Left ventricle myocardium inferior (tissue), 1 donor: ENCODE measurements at regions of chr3 and their contacts with region 1.

Region 1: GRCh38 chr3:129249276-129250065 is at the start of gene COPG1:
- DNase-seq: peak; percentile 86
- H3K4me3 ChIP-seq: peak within 1 kb of the TSS; percentile 95
- H3K27ac ChIP-seq: peak within 1 kb of the TSS; percentile 90
- H3K4me1 ChIP-seq: peaks cover 69% of the 10 kb centered on the region
- H3K27me3 ChIP-seq: no peaks in the 10 kb centered on the region
- CTCF ChIP-seq: no peak
- total RNA-seq, gene COPG1: 86.1 TPM

Region 2: GRCh38 chr3:129052675-129053074 is 196.8 kb before region 1 on chr3:
- intact Hi-C with region 1: loop called (anchors 5 kb)
- DNase-seq: peak; percentile 77
- H3K4me3 ChIP-seq: no peak overlapping the region
- H3K27ac ChIP-seq: peak overlapping the region; percentile 88
- H3K4me1 ChIP-seq: peaks cover 29% of the 10 kb centered on the region
- H3K27me3 ChIP-seq: no peaks in the 10 kb centered on the region
- CTCF ChIP-seq: no peak

Region 3: GRCh38 chr3:129139911-129140310 is 109.6 kb before region 1 on chr3:
- intact Hi-C with region 1: no loop called
- DNase-seq: no peak
- H3K4me3 ChIP-seq: no peak overlapping the region
- H3K27ac ChIP-seq: no peak overlapping the region
- H3K4me1 ChIP-seq: no peaks in the 10 kb centered on the region
- H3K27me3 ChIP-seq: no peaks in the 10 kb centered on the region
- CTCF ChIP-seq: no peak